Naive thymus-derived CD4-positive, alpha-beta T cell (primary cell): ENCODE measurements at regions of chr14 and their contacts with region 1.

Region 1: GRCh38 chr14:91883753-91884152 is 16.4 kb upstream of the TC2N start:
- DNase-seq: no peak
- ATAC-seq: no peak
- H3K4me3 ChIP-seq: no peak overlapping the region
- H3K4me3 Mint-ChIP-seq: no peak overlapping the region
- H3K27ac ChIP-seq: no peak overlapping the region
- H3K27ac Mint-ChIP-seq: peak overlapping the region in 6 of 9 donors; percentile 12 to 75 (median 42)
- H3K4me1 ChIP-seq: peaks cover 19 to 21% of the 10 kb centered on the region in 2 donors
- H3K4me1 Mint-ChIP-seq: peaks cover 33 to 48% (median 38%) of the 10 kb centered on the region in 7 donors
- H3K27me3 ChIP-seq: no peaks in the 10 kb centered on the region
- H3K27me3 Mint-ChIP-seq: no peaks in the 10 kb centered on the region

Region 2: GRCh38 chr14:91858215-91858905 is 25.4 kb before region 1 on chr14:
- CTCF ChIA-PET with region 1: interaction called, 4 read pairs
- POLR2A ChIA-PET with region 1: interaction called, 11 read pairs
- intact Hi-C with region 1: no loop called
- DNase-seq: no peak
- ATAC-seq: peak; percentile 63
- H3K4me3 ChIP-seq: no peak overlapping the region
- H3K4me3 Mint-ChIP-seq: peak overlapping the region; percentile 34 to 92 (median 50)
- H3K27ac ChIP-seq: peak overlapping the region; percentile 34
- H3K27ac Mint-ChIP-seq: peak overlapping the region; percentile 51 to 100 (median 88)
- H3K4me1 ChIP-seq: peaks cover 83 to 86% of the 10 kb centered on the region in 2 donors
- H3K4me1 Mint-ChIP-seq: peaks cover 74 to 99% (median 96%) of the 10 kb centered on the region in 7 donors
- H3K27me3 ChIP-seq: no peaks in the 10 kb centered on the region
- H3K27me3 Mint-ChIP-seq: no peaks in the 10 kb centered on the region